Calu3 (cell line): ENCODE measurements at regions of chr1 and their contacts with region 1.

Region 1: GRCh38 chr1:225652729-225653462 is at the start of gene ENAH:
- DNase-seq: peak; percentile 87
- H3K4me3 Mint-ChIP-seq: peak within 1 kb of the TSS; percentile 98
- H3K27ac Mint-ChIP-seq: peak within 1 kb of the TSS; percentile 98
- H3K4me1 Mint-ChIP-seq: peaks cover 39% of the 10 kb centered on the region
- H3K27me3 Mint-ChIP-seq: no peaks in the 10 kb centered on the region
- CTCF ChIP-seq: no peak
- total RNA-seq, gene ENAH: 92.6 and 103 TPM in 2 replicates

Region 2: GRCh38 chr1:225454733-225455132 is 198.2 kb before region 1 on chr1:
- CTCF ChIA-PET with region 1: no interaction called
- intact Hi-C with region 1: no loop called
- DNase-seq: peak; percentile 76
- H3K4me3 Mint-ChIP-seq: peak overlapping the region; percentile 24
- H3K27ac Mint-ChIP-seq: peak overlapping the region; percentile 79
- H3K4me1 Mint-ChIP-seq: peaks cover 63% of the 10 kb centered on the region
- H3K27me3 Mint-ChIP-seq: no peaks in the 10 kb centered on the region
- CTCF ChIP-seq: no peak

Region 3: GRCh38 chr1:225480825-225481434 is 172.0 kb before region 1 on chr1:
- CTCF ChIA-PET with region 1: interaction called, 4 read pairs
- intact Hi-C with region 1: loop called (anchors 10 kb)
- DNase-seq: peak; percentile 89
- H3K4me3 Mint-ChIP-seq: no peak overlapping the region
- H3K27ac Mint-ChIP-seq: no peak overlapping the region
- H3K4me1 Mint-ChIP-seq: peaks cover 15% of the 10 kb centered on the region
- H3K27me3 Mint-ChIP-seq: no peaks in the 10 kb centered on the region
- CTCF ChIP-seq: peak; percentile 96

Region 4: DNA sequence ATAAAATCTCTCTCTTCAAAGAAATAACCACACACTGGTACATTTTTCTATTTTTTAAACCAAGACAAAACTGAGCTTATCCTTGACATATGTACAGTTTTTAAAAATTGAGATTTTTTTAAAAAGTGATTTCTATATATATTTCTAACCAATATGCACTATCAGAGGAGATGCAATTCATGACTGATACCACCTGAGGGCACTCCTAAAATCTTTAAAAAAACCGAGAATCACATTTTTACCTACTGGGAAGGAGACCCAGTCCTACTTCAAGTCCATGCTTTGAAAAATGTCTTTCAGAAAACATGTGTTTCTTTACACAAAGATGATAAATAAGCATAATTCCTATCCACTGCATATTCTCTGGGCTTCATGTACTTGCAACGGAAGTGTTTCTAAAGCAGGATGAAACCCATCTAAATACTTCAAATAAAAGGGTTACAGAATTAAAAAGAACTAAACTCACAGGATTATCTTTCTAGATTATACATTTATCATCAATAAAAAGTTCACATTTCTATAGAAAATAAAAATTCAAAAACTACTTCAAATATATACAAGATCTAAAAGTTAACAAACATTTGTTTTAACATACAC is 98.6 kb before region 1 on chr1:
- CTCF ChIA-PET with region 1: no interaction called
- intact Hi-C with region 1: loop called (anchors 1 kb)
- DNase-seq: peak; percentile 19
- H3K4me3 Mint-ChIP-seq: no peak overlapping the region
- H3K27ac Mint-ChIP-seq: no peak overlapping the region
- H3K4me1 Mint-ChIP-seq: peaks cover 8% of the 10 kb centered on the region
- H3K27me3 Mint-ChIP-seq: no peaks in the 10 kb centered on the region
- CTCF ChIP-seq: peak; percentile 51

Region 5: GRCh38 chr1:225603538-225604354 is 49.1 kb before region 1 on chr1:
- CTCF ChIA-PET with region 1: no interaction called
- intact Hi-C with region 1: loop called (anchors 5 kb)
- DNase-seq: peak; percentile 27
- H3K4me3 Mint-ChIP-seq: peak overlapping the region; percentile 47
- H3K27ac Mint-ChIP-seq: peak overlapping the region; percentile 74
- H3K4me1 Mint-ChIP-seq: peaks cover 61% of the 10 kb centered on the region
- H3K27me3 Mint-ChIP-seq: no peaks in the 10 kb centered on the region
- CTCF ChIP-seq: no peak

Region 6: GRCh38 chr1:225642177-225642576 is 10.7 kb before region 1 on chr1:
- CTCF ChIA-PET with region 1: no interaction called
- intact Hi-C with region 1: no loop called
- DNase-seq: no peak
- H3K4me3 Mint-ChIP-seq: no peak overlapping the region
- H3K27ac Mint-ChIP-seq: no peak overlapping the region
- H3K4me1 Mint-ChIP-seq: no peaks in the 10 kb centered on the region
- H3K27me3 Mint-ChIP-seq: no peaks in the 10 kb centered on the region
- CTCF ChIP-seq: no peak

Region 7: DNA sequence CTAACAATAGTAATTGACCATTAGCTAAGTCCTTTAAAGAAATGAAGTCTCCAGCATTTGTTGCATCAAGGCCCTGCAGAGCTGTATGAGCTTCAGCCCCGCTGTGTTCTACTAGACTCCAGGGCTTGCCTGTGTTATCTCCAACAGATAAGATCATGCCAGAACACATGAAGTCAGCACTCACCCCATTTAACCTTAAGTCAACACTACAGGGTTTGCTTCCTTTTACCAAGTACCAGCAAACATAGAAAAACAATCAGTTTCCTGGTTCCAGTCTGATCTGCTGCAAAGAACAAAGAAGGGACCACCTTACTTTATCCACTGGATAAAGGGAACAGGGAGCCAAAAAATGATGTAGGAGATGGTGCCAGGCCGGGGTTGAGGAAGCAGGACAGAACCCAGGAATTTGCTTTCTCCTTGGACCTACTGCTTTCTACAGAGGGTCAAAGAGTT is 41.3 kb after region 1 on chr1:
- CTCF ChIA-PET with region 1: no interaction called
- intact Hi-C with region 1: loop called (anchors 5 kb)
- DNase-seq: peak; percentile 16
- H3K4me3 Mint-ChIP-seq: no peak overlapping the region
- H3K27ac Mint-ChIP-seq: peak overlapping the region; percentile 47
- H3K4me1 Mint-ChIP-seq: peaks cover 23% of the 10 kb centered on the region
- H3K27me3 Mint-ChIP-seq: no peaks in the 10 kb centered on the region
- CTCF ChIP-seq: no peak

Region 8: DNA sequence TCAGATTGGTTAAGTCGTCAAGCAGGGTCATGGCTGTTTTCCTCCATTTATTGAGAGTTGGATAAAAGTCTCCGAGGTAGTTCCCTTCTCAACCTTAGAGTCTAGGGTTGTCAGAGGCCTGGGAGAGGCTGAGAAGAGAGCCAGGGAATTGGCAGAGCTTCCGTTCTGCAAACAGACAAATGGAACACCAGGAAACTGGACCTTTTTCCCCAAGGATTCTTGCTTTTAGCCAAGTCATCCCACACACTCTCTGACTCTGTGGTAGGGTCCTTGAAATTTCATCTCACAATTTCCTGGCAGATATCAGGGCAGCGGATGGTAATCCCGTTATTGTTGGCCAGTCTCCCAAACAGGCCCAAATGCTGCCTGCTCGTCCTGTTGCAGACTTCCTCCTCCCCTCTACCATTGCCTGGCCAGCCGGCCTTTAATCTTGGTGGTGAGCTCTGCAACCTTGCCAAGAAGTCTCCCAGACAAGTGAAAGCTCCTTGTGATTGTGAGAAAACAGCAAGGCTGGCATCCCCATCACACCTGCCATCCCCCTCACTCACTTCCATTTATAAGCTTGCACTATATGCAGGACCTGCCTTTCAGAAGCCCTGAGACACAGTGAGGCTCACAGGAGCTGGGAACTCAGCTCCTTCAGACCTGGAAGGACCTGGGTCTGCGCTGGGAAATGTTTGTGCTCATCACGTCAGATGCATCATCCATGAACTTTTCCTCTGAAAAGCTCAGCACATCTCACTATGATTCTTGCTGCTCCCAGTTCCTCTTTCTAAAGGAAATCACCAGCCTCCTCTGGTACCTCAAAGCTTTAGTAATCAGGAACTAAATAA is 111.0 kb after region 1 on chr1:
- CTCF ChIA-PET with region 1: no interaction called
- intact Hi-C with region 1: no loop called
- DNase-seq: no peak
- H3K4me3 Mint-ChIP-seq: no peak overlapping the region
- H3K27ac Mint-ChIP-seq: no peak overlapping the region
- H3K4me1 Mint-ChIP-seq: peaks cover 25% of the 10 kb centered on the region
- H3K27me3 Mint-ChIP-seq: no peaks in the 10 kb centered on the region
- CTCF ChIP-seq: no peak